ENCODE measurements at regions of chr9 and their contacts with region 1.

Region 1: DNA sequence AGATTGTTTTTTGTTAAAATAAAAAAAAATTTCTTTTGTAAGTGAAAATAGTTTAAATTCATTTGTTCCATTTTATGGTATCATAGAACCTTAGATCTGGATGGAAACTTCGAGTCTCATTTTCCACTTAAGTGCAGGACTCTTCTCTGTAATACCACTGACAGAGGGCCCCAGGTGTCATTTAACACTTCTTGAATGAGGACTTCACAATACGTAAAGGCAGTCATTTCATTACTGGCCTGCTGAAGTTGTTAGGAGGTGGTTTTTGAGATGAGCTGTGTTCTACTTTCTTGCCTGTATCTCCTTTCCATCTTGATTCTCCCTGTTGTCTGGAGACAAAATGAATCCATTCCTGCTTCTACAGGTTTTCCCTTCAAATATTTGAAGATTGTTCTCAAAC is 455.3 kb downstream of the DMRT2 start:
- DNase-seq: no peak
- H3K4me3 ChIP-seq: no peak overlapping the region
- H3K27ac ChIP-seq: no peak overlapping the region
- H3K4me1 ChIP-seq: no peaks in the 10 kb centered on the region
- H3K27me3 ChIP-seq: no peaks in the 10 kb centered on the region
- CTCF ChIP-seq: no peak

Region 2: GRCh38 chr9:1050116-1050800 is 455.2 kb before region 1 on chr9 and contains the start of gene DMRT2:
- CTCF ChIA-PET with region 1: no interaction called
- POLR2A ChIA-PET with region 1: interaction called, 11 read pairs
- intact Hi-C with region 1: no loop called
- DNase-seq: peak; percentile 63
- H3K4me3 ChIP-seq: no peak within 1 kb of the TSS
- H3K27ac ChIP-seq: no peak within 1 kb of the TSS
- H3K4me1 ChIP-seq: no peaks in the 10 kb centered on the region
- H3K27me3 ChIP-seq: peaks cover 100% of the 10 kb centered on the region
- CTCF ChIP-seq: no peak
- total RNA-seq, gene DMRT2: not detected in 2 replicates

Measured in A673 (cell line).